Naive thymus-derived CD8-positive, alpha-beta T cell (primary cell): ENCODE measurements at regions of chr6 and their contacts with region 1.

Region 1: DNA sequence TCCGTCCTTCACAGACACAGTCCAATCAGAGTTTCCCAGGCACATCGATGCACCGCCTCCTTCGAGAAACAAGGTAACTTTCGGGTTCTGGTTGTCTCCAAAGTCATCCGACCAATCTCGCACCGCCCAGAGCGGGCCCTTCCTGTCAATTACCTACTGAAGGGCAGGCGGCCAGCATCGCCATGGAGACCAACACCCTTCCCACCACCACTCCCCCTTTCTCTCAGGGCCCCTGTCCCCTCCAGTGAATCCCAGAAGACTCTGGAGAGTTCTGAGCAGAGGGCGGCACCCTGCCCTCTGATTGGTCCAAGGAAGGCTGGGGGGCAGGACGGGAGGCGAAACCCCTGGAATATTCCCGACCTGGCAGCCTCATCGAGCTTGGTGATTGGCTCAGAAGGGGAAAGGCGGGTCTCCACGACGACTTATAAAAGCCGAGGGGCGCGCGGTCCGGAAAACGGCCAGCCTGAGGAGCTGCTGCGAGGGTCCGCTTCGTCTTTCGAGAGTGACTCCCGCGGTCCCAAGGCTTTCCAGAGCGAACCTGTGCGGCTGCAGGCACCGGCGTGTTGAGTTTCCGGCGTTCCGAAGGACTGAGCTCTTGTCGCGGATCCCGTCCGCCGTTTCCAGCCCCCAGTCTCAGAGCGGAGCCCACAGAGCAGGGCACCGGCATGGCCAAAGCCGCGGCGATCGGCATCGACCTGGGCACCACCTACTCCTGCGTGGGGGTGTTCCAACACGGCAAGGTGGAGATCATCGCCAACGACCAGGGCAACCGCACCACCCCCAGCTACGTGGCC is at the start of gene HSPA1B:
- DNase-seq: peak; percentile 59 to 90 (median 76)
- ATAC-seq: peak; percentile 72 to 74
- H3K4me3 Mint-ChIP-seq: peak within 1 kb of the TSS; percentile 84 to 96 (median 92)
- H3K27ac Mint-ChIP-seq: peak within 1 kb of the TSS; percentile 81 to 99 (median 96)
- H3K4me1 Mint-ChIP-seq: peaks cover 8 to 53% (median 33%) of the 10 kb centered on the region in 4 donors
- H3K27me3 Mint-ChIP-seq: no peaks in the 10 kb centered on the region
- polyA plus RNA-seq, gene HSPA1B: 0.28 to 1.3 (median 1.2) TPM

Region 2: GRCh38 chr6:31677955-31678354 is 149.5 kb before region 1 on chr6:
- POLR2A ChIA-PET with region 1: interaction called, 13 read pairs
- DNase-seq: no peak
- ATAC-seq: no peak
- H3K4me3 Mint-ChIP-seq: no peak overlapping the region
- H3K27ac Mint-ChIP-seq: peak overlapping the region in 1 of 10 donors; percentile 71
- H3K4me1 Mint-ChIP-seq: peaks cover 19 to 27% (median 22%) of the 10 kb centered on the region in 4 donors
- H3K27me3 Mint-ChIP-seq: no peaks in the 10 kb centered on the region

Region 3: GRCh38 chr6:31702819-31703522 is 124.5 kb before region 1 on chr6 and contains the start of gene ABHD16A:
- POLR2A ChIA-PET with region 1: interaction called, 11 read pairs
- DNase-seq: peak; percentile 93 to 99 (median 96)
- ATAC-seq: peak; percentile 93 to 94
- H3K4me3 Mint-ChIP-seq: peak within 1 kb of the TSS; percentile 95 to 100 (median 98)
- H3K27ac Mint-ChIP-seq: peak within 1 kb of the TSS; percentile 91 to 99 (median 96)
- H3K4me1 Mint-ChIP-seq: peaks cover 17 to 43% (median 33%) of the 10 kb centered on the region in 4 donors
- H3K27me3 Mint-ChIP-seq: no peaks in the 10 kb centered on the region
- polyA plus RNA-seq, gene ABHD16A: 26.9 to 35.5 (median 34.1) TPM

Region 4: GRCh38 chr6:31729515-31729978 is 97.9 kb before region 1 on chr6:
- POLR2A ChIA-PET with region 1: interaction called, 12 read pairs
- DNase-seq: peak; percentile 61 to 88 (median 77)
- ATAC-seq: peak; percentile 73 to 81
- H3K4me3 Mint-ChIP-seq: peak overlapping the region; percentile 94 to 98 (median 97)
- H3K27ac Mint-ChIP-seq: peak overlapping the region; percentile 65 to 94 (median 88)
- H3K4me1 Mint-ChIP-seq: peaks cover 22 to 69% (median 64%) of the 10 kb centered on the region in 4 donors
- H3K27me3 Mint-ChIP-seq: no peaks in the 10 kb centered on the region

Region 5: DNA sequence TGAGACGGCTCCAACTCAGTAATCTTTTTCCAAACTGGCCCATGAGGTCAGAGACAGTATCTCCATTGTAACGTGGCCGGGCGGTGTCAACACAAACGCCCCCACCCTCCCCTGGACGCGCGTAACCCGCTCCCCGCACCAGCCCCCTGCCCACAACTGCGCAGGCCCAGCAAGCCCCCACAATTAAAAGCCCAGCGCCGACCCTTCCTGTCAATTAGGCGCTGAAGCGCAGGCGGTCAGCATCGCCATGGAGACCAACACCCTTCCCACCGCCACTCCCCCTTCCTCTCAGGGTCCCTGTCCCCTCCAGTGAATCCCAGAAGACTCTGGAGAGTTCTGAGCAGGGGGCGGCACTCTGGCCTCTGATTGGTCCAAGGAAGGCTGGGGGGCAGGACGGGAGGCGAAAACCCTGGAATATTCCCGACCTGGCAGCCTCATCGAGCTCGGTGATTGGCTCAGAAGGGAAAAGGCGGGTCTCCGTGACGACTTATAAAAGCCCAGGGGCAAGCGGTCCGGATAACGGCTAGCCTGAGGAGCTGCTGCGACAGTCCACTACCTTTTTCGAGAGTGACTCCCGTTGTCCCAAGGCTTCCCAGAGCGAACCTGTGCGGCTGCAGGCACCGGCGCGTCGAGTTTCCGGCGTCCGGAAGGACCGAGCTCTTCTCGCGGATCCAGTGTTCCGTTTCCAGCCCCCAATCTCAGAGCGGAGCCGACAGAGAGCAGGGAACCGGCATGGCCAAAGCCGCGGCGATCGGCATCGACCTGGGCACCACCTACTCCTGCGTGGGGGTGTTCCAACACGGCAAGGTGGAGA is 12.3 kb before region 1 on chr6 and contains the starts of genes HSPA1A and HSPA1L:
- POLR2A ChIA-PET with region 1: interaction called, 18 read pairs
- DNase-seq: peak in 6 of 10 donors; percentile 23 to 68 (median 44)
- ATAC-seq: peak; percentile 17 to 39
- H3K4me3 Mint-ChIP-seq: peak within 1 kb of the TSS; percentile 90 to 95 (median 92)
- H3K27ac Mint-ChIP-seq: peak within 1 kb of the TSS; percentile 79 to 95 (median 90)
- H3K4me1 Mint-ChIP-seq: peaks cover 7 to 42% (median 28%) of the 10 kb centered on the region in 4 donors
- H3K27me3 Mint-ChIP-seq: no peaks in the 10 kb centered on the region
- polyA plus RNA-seq, gene HSPA1A: 6.9 to 17.3 (median 11.4) TPM
- polyA plus RNA-seq, gene HSPA1L: 0.56 to 1.6 (median 1.6) TPM

Region 6: GRCh38 chr6:31844507-31844906 is 17.0 kb after region 1 on chr6:
- POLR2A ChIA-PET with region 1: no interaction called
- DNase-seq: no peak
- ATAC-seq: no peak
- H3K4me3 Mint-ChIP-seq: no peak overlapping the region
- H3K27ac Mint-ChIP-seq: peak overlapping the region in 4 of 10 donors; percentile 48 to 78 (median 68)
- H3K4me1 Mint-ChIP-seq: peaks cover under 1 to 7% (median 2%) of the 10 kb centered on the region in 4 donors
- H3K27me3 Mint-ChIP-seq: no peaks in the 10 kb centered on the region

Region 7: DNA sequence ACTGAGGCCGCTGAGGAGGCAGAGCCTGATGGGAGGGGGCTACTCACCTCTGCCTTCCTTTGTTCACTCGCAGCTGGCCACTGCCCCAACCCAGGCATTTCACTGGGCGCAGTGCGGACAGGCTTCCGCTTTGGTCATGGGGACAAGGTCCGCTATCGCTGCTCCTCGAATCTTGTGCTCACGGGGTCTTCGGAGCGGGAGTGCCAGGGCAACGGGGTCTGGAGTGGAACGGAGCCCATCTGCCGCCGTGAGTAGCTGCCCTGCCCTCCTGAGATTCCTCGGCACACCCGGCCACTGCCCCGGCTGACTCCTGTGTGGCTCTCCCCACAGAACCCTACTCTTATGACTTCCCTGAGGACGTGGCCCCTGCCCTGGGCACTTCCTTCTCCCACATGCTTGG is 106.1 kb after region 1 on chr6:
- POLR2A ChIA-PET with region 1: no interaction called
- DNase-seq: peak in 1 of 10 donors; percentile 42
- ATAC-seq: no peak
- H3K4me3 Mint-ChIP-seq: no peak overlapping the region
- H3K27ac Mint-ChIP-seq: peak overlapping the region in 1 of 10 donors; percentile 31
- H3K4me1 Mint-ChIP-seq: no peaks in the 10 kb centered on the region
- H3K27me3 Mint-ChIP-seq: peaks cover 0 to 12% (median 2%) of the 10 kb centered on the region in 5 donors